Calu3 (cell line): ENCODE measurements at regions of chr1 and their contacts with region 1.

Region 1: GRCh38 chr1:174999216-174999925 is 376 bp upstream of the CACYBP start:
- DNase-seq: peak; percentile 97
- H3K4me3 Mint-ChIP-seq: no peak overlapping the region
- H3K27ac Mint-ChIP-seq: no peak overlapping the region
- H3K4me1 Mint-ChIP-seq: peaks cover 47% of the 10 kb centered on the region
- H3K27me3 Mint-ChIP-seq: no peaks in the 10 kb centered on the region
- CTCF ChIP-seq: no peak

Region 2: GRCh38 chr1:174022080-174022975 is 977.0 kb before region 1 on chr1 and contains the start of gene RC3H1:
- CTCF ChIA-PET with region 1: no interaction called
- intact Hi-C with region 1: loop called (anchors 10 kb)
- DNase-seq: peak; percentile 91
- H3K4me3 Mint-ChIP-seq: peak within 1 kb of the TSS; percentile 77
- H3K27ac Mint-ChIP-seq: peak within 1 kb of the TSS; percentile 94
- H3K4me1 Mint-ChIP-seq: peaks cover 26% of the 10 kb centered on the region
- H3K27me3 Mint-ChIP-seq: no peaks in the 10 kb centered on the region
- CTCF ChIP-seq: no peak
- total RNA-seq, gene RC3H1: 42.1 and 44.2 TPM in 2 replicates

Region 3: DNA sequence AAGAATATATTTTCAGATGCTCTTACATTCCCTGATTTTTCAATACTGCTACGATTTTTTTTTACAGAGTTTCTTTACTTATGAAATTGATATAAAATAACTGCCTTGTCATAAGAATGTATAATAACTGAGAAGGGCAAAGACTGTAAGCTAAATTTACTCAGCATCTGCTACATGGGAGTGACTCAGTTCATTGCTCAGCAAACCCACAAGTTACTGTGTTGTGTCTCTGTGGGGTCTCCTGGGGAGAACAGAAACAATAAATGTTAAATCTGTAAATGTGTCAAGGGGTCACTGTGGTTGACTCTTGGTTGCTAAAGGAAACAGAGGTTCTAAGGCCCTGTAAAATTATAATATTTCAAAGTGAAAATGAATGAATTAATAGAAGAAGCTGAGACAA is 210.0 kb before region 1 on chr1:
- CTCF ChIA-PET with region 1: no interaction called
- intact Hi-C with region 1: loop called (anchors 5 kb)
- DNase-seq: no peak
- H3K4me3 Mint-ChIP-seq: no peak overlapping the region
- H3K27ac Mint-ChIP-seq: peak overlapping the region; percentile 16
- H3K4me1 Mint-ChIP-seq: peaks cover 19% of the 10 kb centered on the region
- H3K27me3 Mint-ChIP-seq: no peaks in the 10 kb centered on the region
- CTCF ChIP-seq: no peak

Region 4: DNA sequence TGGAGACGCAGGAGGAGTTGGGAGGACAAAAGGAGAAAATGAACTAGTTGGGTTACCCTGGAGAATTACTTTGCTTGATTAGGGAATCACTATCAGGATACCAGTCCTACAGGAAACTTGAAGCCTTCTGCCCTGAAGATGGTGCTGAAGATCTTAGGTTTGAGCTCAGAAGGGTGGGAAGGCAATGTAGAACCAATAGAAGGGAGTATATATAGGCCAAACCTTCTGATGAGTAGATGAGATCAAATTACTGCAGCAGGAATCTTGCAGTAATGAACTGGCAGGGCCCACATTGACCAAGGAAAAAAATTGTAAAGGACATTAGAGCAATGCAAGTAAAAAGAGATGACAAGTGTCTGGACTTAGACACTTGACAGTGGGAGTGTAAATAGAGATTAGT is 116.0 kb before region 1 on chr1:
- CTCF ChIA-PET with region 1: interaction called, 12 read pairs
- intact Hi-C with region 1: no loop called
- DNase-seq: no peak
- H3K4me3 Mint-ChIP-seq: no peak overlapping the region
- H3K27ac Mint-ChIP-seq: no peak overlapping the region
- H3K4me1 Mint-ChIP-seq: peaks cover 23% of the 10 kb centered on the region
- H3K27me3 Mint-ChIP-seq: no peaks in the 10 kb centered on the region
- CTCF ChIP-seq: no peak

Region 5: DNA sequence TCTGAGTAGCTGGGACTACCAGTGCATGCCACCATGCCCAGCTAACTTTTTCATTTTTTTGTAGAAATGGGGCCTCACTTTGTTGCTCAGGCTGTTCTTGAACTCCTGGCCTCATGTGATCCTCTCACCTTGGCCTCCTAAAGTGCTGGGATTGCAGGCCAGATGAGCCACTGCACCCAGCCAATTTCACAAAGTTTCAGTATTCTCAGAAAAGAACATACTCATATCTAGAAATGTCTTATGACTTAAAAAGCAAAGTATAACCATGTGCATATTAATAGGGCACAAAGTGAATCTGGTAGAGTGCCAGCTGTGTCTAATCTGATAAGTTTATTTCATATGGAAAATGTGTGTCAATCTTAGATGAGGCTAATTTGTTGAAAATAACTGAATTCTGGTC is 87.1 kb before region 1 on chr1:
- CTCF ChIA-PET with region 1: no interaction called
- intact Hi-C with region 1: no loop called
- DNase-seq: no peak
- H3K4me3 Mint-ChIP-seq: no peak overlapping the region
- H3K27ac Mint-ChIP-seq: no peak overlapping the region
- H3K4me1 Mint-ChIP-seq: no peaks in the 10 kb centered on the region
- H3K27me3 Mint-ChIP-seq: no peaks in the 10 kb centered on the region
- CTCF ChIP-seq: no peak

Region 6: GRCh38 chr1:175023043-175023921 is 23.9 kb after region 1 on chr1 and contains the start of gene MRPS14:
- CTCF ChIA-PET with region 1: interaction called, 11 read pairs
- intact Hi-C with region 1: no loop called
- DNase-seq: peak; percentile 99
- H3K4me3 Mint-ChIP-seq: peak within 1 kb of the TSS; percentile 77
- H3K27ac Mint-ChIP-seq: peak within 1 kb of the TSS; percentile 63
- H3K4me1 Mint-ChIP-seq: peaks cover 15% of the 10 kb centered on the region
- H3K27me3 Mint-ChIP-seq: no peaks in the 10 kb centered on the region
- CTCF ChIP-seq: no peak
- total RNA-seq, gene MRPS14: 29.9 and 33.6 TPM in 2 replicates